Common myeloid progenitor, CD34-positive (primary cell): ENCODE measurements at regions of chr3 and their contacts with region 1.

Region 1: GRCh38 chr3:46987743-46988401 is 8.4 kb downstream of the NBEAL2 start:
- DNase-seq: peak; percentile 91 to 95 (median 95)
- H3K4me3 ChIP-seq: peak overlapping the region in 5 of 7 experiments; percentile 16 to 67 (median 52)
- H3K27ac ChIP-seq: peak overlapping the region; percentile 54 to 89
- H3K4me1 ChIP-seq: peaks cover 2 to 73% (median 64%) of the 10 kb centered on the region in 4 experiments
- H3K27me3 ChIP-seq: no peaks in the 10 kb centered on the region

Region 2: DNA sequence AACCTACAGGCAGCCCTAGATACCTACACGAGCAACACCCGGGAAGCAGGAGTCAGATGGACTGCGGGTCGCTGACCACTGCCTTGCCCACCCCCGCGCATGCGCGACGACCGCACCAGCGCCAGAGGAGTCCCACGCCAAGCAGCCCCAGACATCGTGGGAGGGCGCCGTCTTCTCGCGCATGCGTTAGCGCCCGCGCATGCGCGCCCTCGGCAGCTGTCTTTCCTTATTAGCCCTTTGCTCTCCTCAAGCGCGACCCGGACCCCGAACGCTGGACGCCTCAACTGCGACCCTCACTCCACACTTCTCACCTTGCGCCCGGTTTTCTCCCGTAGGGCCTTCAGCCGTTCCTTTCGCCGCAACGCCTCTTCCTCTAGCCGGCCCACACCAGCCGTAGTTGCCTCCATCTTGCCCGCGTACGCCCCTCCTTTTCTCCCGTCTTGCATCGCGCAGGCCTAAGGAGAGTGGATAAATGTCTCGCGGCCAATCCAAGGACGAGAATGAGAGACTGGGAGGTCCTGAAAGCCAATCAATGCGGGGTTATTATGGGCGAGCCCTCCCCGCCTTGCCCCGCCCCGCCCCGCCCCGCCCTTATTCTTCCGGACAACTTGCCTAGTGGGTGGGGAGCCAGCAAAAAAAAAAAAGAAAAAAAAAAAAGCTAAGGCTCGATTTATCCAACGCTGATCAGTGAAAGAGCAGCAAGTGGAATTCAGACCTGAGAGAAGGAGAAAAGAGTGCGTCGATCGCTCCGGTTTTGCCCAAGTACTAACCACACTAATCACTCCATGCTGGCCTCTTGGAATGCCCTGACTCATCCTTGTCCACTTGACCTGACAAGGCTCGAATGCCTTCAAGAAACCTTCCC is 11.3 kb before region 1 on chr3 and contains the start of gene CCDC12:
- CTCF ChIA-PET with region 1: interaction called, 15 read pairs
- POLR2A ChIA-PET with region 1: interaction called, 3 read pairs
- DNase-seq: peak; percentile 99
- H3K4me3 ChIP-seq: peak within 1 kb of the TSS; percentile 83 to 96 (median 91)
- H3K27ac ChIP-seq: peak within 1 kb of the TSS; percentile 84 to 94
- H3K4me1 ChIP-seq: peaks cover 28 to 76% (median 73%) of the 10 kb centered on the region in 4 experiments
- H3K27me3 ChIP-seq: no peaks in the 10 kb centered on the region

Region 3: DNA sequence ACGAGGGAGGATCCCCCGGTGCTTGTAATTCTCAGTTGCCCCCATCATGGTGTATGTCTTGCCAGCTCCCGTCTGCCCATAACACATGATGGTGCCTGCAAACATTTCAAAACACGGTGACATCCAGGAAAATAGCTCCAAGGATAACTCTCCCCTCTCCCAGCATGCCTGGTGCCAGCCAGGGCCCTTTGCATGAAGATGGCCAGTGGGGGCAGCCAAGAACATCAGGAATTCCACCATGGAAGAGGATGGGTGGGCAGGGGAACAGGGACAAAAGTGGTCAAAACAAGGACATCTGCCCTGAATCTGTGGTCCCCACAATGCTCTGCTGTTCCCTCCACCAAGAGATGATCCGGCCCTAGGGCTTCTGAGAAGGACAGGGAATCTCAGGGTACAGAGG is 285.7 kb after region 1 on chr3:
- CTCF ChIA-PET with region 1: no interaction called
- POLR2A ChIA-PET with region 1: no interaction called
- DNase-seq: no peak
- H3K4me3 ChIP-seq: no peak overlapping the region
- H3K27ac ChIP-seq: no peak overlapping the region
- H3K4me1 ChIP-seq: peaks cover 0 to 12% (median 2%) of the 10 kb centered on the region in 4 experiments
- H3K27me3 ChIP-seq: no peaks in the 10 kb centered on the region